ENCODE measurements at regions of chr15 and their contacts with region 1.

Region 1: GRCh38 chr15:57751177-57751800 is 44.8 kb downstream of the POLR2M start:
- DNase-seq: no peak
- ATAC-seq: peak; percentile 80

Region 2: GRCh38 chr15:57861036-57861638 is 109.8 kb after region 1 on chr15:
- intact Hi-C with region 1: loop called in 1 of 2 experiments (anchors 2 kb)
- DNase-seq: no peak
- ATAC-seq: peak; percentile 71

Region 3: DNA sequence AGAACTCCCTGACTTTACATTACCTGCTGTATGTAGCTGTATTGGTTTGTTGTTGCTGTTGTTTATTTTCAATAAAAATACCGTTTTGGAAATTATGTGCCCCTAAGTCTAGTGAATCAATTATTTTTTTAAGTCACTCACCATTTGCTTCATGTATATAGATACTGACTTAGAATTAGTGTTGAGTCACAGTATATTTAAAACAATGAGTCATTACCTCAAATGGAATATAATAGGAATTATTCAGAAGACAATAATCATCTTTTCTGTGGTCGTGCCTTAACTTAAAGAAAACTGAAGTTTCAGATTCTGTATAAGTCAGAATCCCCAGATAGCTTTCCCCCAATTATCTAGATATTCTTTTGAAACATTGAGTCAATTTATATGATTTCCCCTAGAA is 335.2 kb after region 1 on chr15:
- intact Hi-C with region 1: loop called in 1 of 2 experiments (anchors 10 kb)
- DNase-seq: no peak
- ATAC-seq: no peak

Measured in left colon (tissue), 2 donors.